Astrocyte of the cerebellum (primary cell): ENCODE measurements at regions of chr12 and their contacts with region 1.

Region 1: DNA sequence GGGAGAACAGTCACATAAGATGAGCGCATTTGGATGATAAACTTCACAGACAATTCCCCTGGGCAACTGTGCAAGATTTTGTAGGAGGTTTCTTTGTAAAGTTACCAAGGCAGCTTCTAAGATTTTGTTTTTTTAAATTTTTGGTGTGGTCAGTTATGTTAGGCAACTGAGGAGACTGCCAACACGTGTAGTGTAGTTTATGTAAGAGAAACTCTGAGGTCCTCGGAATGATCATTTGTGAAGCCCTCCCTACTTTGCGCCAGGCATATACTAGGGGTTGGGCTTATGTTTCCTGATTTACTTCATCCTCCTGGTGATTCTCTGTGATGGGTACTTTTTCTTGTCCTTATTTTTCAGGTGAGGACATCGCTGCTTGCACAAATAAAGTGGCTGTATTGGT is 433.6 kb downstream of the TMEM132D start:
- DNase-seq: no peak
- H3K4me3 ChIP-seq: no peak overlapping the region
- CTCF ChIP-seq: no peak

Region 2: GRCh38 chr12:129257524-129257923 is 212.7 kb before region 1 on chr12:
- in situ Hi-C with region 1: no loop called
- DNase-seq: no peak
- H3K4me3 ChIP-seq: no peak overlapping the region
- CTCF ChIP-seq: no peak

Region 3: DNA sequence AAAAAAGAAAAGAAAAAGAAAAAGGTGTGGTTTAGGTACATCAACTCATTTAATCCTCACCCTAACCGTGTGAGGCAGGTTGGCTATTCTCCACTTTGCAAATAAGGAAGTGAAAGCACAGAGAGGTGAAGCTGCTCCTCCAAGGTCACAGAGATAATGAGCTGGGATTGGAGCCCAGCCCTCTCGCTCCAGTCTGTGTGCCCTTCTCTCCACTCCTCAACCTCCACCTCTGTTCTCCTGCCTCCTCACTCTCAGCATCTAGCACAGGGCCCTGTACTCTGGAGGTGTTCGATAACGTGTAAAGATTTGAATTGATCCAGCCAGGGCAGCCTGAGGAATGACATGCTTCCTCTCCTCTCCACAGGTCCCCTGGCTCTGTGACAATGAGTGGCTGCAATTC is 68.6 kb before region 1 on chr12:
- in situ Hi-C with region 1: loop called (anchors 10 kb)
- DNase-seq: no peak
- H3K4me3 ChIP-seq: no peak overlapping the region
- CTCF ChIP-seq: no peak

Region 4: GRCh38 chr12:129520771-129521170 is 50.6 kb after region 1 on chr12:
- in situ Hi-C with region 1: no loop called
- DNase-seq: peak; percentile 24
- H3K4me3 ChIP-seq: no peak overlapping the region
- CTCF ChIP-seq: no peak

Region 5: DNA sequence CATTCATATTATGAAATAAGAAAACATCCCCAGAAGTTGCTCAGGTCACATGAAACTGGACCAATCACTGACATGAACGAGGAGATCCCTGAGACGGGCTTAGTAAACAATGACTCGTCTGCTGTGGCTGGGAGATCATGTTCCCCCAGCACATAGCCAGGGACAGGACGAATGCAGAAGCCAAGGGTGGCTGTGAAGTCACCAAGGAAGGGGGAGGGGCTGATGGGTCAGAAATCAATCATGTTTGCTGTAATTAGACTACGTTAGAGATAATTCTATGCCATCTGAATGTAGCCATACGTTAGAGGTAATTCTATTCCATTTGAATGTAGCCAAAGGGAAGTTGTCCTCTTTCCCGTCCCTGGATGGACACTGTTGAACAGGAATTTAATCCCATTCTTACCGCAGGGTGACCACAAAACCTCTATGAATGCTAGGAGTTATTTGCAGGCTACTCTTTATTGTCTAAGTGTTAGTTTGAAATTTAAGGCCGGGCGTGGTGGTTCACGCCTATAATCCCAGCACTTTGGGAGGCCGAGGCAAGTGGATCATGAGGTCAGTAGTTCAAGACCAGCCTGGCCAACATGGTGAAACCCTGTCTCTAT is 100.7 kb after region 1 on chr12:
- in situ Hi-C with region 1: no loop called
- DNase-seq: no peak
- H3K4me3 ChIP-seq: no peak overlapping the region
- CTCF ChIP-seq: no peak